ENCODE measurements at regions of chr16 and their contacts with region 1.

Region 1: DNA sequence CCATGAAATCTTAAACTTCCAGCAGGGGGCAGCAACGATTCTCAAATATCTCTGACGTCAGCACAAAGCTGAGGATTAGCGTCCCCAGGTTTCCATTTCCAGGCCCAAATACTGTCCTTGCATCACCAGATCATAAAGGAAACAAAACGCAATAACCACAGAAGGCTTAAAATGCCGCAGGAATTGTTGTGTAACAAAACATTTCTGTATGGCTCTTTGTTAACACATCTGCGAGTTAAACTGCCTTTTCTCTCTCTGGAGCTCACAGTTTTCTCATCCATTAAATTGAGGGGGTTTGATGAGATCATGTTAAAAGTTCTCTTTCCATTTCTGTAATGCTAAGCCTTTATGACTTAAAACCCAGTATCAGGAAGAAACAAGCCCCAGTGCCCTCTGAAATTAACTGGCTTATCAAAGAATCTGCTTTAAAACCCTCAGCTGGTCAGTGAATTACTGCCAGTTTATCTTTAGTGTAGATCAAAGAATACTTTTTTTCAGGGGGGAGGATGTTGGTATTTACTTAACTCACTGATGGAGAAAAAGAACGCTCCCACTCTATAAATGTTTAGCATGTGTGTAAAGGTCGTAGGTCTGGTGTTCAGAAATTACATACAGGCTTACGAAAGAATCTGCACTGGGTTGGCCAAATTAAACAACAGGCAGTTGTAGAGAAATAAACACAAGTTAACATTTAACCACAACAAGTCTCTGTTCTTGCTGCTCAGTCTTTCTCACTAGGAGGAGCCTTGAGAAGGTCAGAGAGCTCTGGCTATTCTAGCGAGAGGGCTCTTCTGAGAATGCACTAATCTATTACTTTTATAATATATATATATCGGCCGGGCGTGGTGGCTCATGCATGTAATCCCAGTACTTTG is 10.6 kb upstream of the TERF2 start:
- DNase-seq: peak; percentile 85
- H3K4me3 ChIP-seq: no peak overlapping the region
- H3K27ac ChIP-seq: peak overlapping the region; percentile 56
- H3K4me1 ChIP-seq: peaks cover 36% of the 10 kb centered on the region
- H3K27me3 ChIP-seq: peaks cover 0 to 1% of the 10 kb centered on the region in 2 experiments
- CTCF ChIP-seq: peak; percentile 39 to 54
- POLR2A ChIP-seq: no peak

Region 2: DNA sequence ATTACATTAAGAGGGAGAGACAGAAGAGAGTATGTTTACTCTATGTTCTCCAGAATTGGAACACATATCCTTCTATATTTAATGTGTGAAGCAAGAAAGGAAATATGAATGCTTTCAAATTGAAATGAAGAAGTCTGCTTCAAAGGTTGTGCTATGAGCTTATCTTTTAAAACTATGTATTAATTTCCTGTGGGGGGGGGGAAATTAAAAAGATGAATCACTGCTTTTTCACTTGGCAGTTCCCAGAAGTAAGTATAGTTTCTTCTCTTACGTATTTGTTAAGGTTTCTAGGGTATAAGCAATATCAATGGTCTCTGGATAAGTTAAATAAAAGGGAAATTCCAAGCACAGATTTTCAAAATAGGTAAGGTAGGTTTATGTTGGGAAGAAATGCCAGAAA is 17.7 kb before region 1 on chr16:
- CTCF ChIA-PET with region 1: interaction called, 16 read pairs
- POLR2A ChIA-PET with region 1: no interaction called
- dilution Hi-C with region 1: no loop called
- intact Hi-C with region 1: no loop called
- DNase-seq: peak; percentile 79
- H3K4me3 ChIP-seq: no peak overlapping the region
- H3K27ac ChIP-seq: peak overlapping the region; percentile 78
- H3K4me1 ChIP-seq: peaks cover 25% of the 10 kb centered on the region
- H3K27me3 ChIP-seq: no peaks in the 10 kb centered on the region
- CTCF ChIP-seq: no peak
- POLR2A ChIP-seq: no peak

Region 3: DNA sequence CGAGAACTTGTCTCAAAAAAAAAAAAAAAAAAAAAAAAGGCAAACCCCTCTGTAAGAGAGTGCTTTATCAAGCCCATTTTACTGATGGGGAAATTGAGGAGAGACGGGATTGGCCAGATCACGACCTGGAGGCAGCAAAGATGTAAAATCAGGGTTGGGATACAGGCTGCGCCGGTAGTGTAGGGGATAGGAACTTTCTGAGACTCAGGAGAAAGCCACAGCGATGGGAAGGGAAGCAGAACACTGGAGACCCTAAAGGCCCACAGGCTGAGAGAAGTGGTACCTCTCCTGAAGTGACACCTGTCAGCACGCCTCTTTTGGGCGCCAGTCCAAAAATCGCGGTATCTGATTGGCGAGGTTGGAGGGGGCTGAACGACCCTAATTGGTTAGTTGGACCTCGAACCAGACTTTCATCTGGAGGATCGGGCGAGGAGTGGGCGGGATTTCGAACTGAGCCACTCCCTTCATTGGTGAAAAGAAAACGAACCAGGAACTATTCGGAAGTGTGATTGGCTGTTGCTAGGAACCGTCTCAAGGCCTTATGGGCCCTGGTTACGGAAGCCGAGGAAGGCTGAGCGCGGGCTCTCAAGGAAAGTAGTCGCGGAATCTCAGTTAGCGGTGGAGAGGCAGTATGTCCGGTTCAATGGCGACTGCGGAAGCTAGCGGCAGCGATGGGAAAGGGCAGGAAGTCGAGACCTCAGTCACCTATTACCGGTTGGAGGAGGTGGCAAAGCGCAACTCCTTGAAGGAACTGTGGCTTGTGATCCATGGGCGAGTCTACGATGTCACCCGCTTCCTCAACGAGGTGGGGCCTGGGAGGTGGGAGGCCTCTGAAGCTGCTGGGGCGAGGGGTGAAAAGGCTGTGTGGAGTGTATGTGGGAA is 27.9 kb after region 1 on chr16 and contains the start of gene CYB5B:
- CTCF ChIA-PET with region 1: interaction called, 21 read pairs
- POLR2A ChIA-PET with region 1: no interaction called
- dilution Hi-C with region 1: no loop called
- intact Hi-C with region 1: loop called (anchors 1 kb)
- DNase-seq: peak; percentile 99
- H3K4me3 ChIP-seq: peak within 1 kb of the TSS; percentile 65 to 100 (median 96)
- H3K27ac ChIP-seq: peak within 1 kb of the TSS; percentile 44
- H3K4me1 ChIP-seq: peaks cover 10% of the 10 kb centered on the region
- H3K27me3 ChIP-seq: no peaks in the 10 kb centered on the region
- CTCF ChIP-seq: no peak
- POLR2A ChIP-seq: peak; percentile 90
- total RNA-seq, gene CYB5B: 169 and 176 TPM in 2 replicates

Region 4: DNA sequence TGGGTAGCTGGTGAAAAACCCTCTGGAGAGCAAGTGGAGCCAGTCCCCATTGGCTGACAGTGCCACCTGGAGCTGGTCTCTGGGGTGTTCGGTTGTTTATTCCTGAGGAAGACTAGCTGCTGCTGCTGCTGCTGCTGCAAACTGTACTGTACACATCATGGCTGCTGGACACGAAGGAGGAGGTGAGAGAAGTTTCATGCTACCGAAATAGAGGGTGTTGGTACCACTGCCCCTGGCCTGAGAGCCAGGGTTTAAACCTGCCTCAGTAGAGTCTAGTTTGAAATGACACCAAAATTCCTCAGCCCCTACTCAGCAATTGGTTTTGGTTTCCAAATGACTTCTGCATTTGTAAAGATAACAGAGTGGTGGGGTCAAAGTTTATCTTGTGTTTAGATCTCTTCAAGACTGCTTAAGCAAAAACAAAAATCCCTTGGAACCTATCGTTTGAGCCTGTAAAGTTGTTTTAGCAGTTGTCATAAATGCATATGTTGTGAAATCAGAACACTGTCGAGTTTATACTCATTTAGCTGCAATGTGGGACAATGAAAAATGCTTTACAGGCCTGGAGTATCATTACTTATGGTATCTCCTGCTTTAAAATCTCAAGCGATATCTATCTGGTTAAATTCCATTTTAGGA is 68.8 kb after region 1 on chr16:
- CTCF ChIA-PET with region 1: interaction called, 57 read pairs
- POLR2A ChIA-PET with region 1: no interaction called
- dilution Hi-C with region 1: no loop called
- intact Hi-C with region 1: loop called (anchors 5 kb)
- DNase-seq: peak; percentile 26
- H3K4me3 ChIP-seq: no peak overlapping the region
- H3K27ac ChIP-seq: no peak overlapping the region
- H3K4me1 ChIP-seq: peaks cover 34% of the 10 kb centered on the region
- H3K27me3 ChIP-seq: no peaks in the 10 kb centered on the region
- CTCF ChIP-seq: peak in 1 of 2 donors; percentile 6
- POLR2A ChIP-seq: no peak

Region 5: GRCh38 chr16:69494993-69495392 is 98.6 kb after region 1 on chr16:
- CTCF ChIA-PET with region 1: interaction called, 10 read pairs
- POLR2A ChIA-PET with region 1: no interaction called
- dilution Hi-C with region 1: no loop called
- intact Hi-C with region 1: no loop called
- DNase-seq: peak; percentile 42
- H3K4me3 ChIP-seq: no peak overlapping the region
- H3K27ac ChIP-seq: no peak overlapping the region
- H3K4me1 ChIP-seq: no peaks in the 10 kb centered on the region
- H3K27me3 ChIP-seq: peaks cover 0 to 2% of the 10 kb centered on the region in 2 experiments
- CTCF ChIP-seq: peak; percentile 40 to 43
- POLR2A ChIP-seq: no peak

Region 6: DNA sequence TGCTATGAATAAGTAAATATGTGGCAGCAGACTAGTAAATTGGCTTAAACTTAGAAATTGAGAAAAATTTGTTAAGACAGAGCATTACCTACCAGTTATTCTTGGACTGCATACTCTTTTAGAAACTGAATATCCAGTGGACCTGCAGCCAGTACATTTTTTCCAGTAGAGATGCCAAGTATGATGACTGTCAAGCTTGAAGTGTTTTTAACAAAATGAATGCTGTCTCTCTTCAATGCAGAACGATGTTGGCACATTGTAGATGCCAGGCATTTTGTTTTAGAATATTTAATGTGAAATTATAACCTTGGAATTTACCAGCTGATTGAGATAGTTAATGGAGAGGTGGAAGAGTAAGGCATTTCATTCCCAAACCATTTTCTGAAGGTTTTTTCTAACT is 221.9 kb after region 1 on chr16:
- CTCF ChIA-PET with region 1: interaction called, 13 read pairs
- POLR2A ChIA-PET with region 1: no interaction called
- dilution Hi-C with region 1: no loop called
- intact Hi-C with region 1: loop called (anchors 5 kb)
- DNase-seq: peak; percentile 79
- H3K4me3 ChIP-seq: no peak overlapping the region
- H3K27ac ChIP-seq: no peak overlapping the region
- H3K4me1 ChIP-seq: peaks cover 23% of the 10 kb centered on the region
- H3K27me3 ChIP-seq: no peaks in the 10 kb centered on the region
- CTCF ChIP-seq: no peak
- POLR2A ChIP-seq: no peak

Region 7: GRCh38 chr16:69703638-69704037 is 307.2 kb after region 1 on chr16:
- CTCF ChIA-PET with region 1: interaction called, 10 read pairs
- POLR2A ChIA-PET with region 1: no interaction called
- dilution Hi-C with region 1: no loop called
- intact Hi-C with region 1: no loop called
- DNase-seq: peak; percentile 18
- H3K4me3 ChIP-seq: no peak overlapping the region
- H3K27ac ChIP-seq: no peak overlapping the region
- H3K4me1 ChIP-seq: peaks cover 4% of the 10 kb centered on the region
- H3K27me3 ChIP-seq: no peaks in the 10 kb centered on the region
- CTCF ChIP-seq: no peak
- POLR2A ChIP-seq: no peak